HepG2 (cell line): ENCODE measurements at regions of chr1 and their contacts with region 1.

Region 1: GRCh38 chr1:160354388-160354985 is 11.3 kb downstream of the NCSTN start:
- DNase-seq: peak; percentile 20
- ATAC-seq: peak; percentile 89
- H3K4me3 ChIP-seq: no peak overlapping the region
- H3K27ac ChIP-seq: no peak overlapping the region
- H3K4me1 ChIP-seq: no peaks in the 10 kb centered on the region
- H3K27me3 ChIP-seq: no peaks in the 10 kb centered on the region
- CTCF ChIP-seq: peak; percentile 65
- EP300 ChIP-seq: no peak
- POLR2A ChIP-seq: no peak
- RAD21 ChIP-seq: no peak

Region 2: GRCh38 chr1:160376525-160377131 is 22.1 kb after region 1 on chr1:
- CTCF ChIA-PET with region 1: interaction called, 16 read pairs
- POLR2A ChIA-PET with region 1: no interaction called
- in situ Hi-C with region 1: no loop called
- intact Hi-C with region 1: loop called (anchors 1 kb)
- DNase-seq: peak; percentile 58
- ATAC-seq: peak; percentile 87
- H3K4me3 ChIP-seq: no peak overlapping the region
- H3K27ac ChIP-seq: no peak overlapping the region
- H3K4me1 ChIP-seq: peaks cover 8% of the 10 kb centered on the region
- H3K27me3 ChIP-seq: no peaks in the 10 kb centered on the region; a peak in 3 of 5 replicates
- CTCF ChIP-seq: peak; percentile 92
- EP300 ChIP-seq: no peak
- POLR2A ChIP-seq: no peak
- RAD21 ChIP-seq: peak; percentile 84